Activated naive CD4-positive, alpha-beta T cell treated with anti-CD3 and anti-CD28 coated beads for 36 hours (primary cell): ENCODE measurements at regions of chr20 and their contacts with region 1.

Region 1: GRCh38 chr20:18632196-18633009 is 44.5 kb downstream of the DTD1 start:
- DNase-seq: peak; percentile 66
- H3K4me3 Mint-ChIP-seq: no peak overlapping the region
- H3K27ac Mint-ChIP-seq: no peak overlapping the region
- H3K4me1 Mint-ChIP-seq: no peaks in the 10 kb centered on the region
- H3K27me3 Mint-ChIP-seq: no peaks in the 10 kb centered on the region

Region 2: DNA sequence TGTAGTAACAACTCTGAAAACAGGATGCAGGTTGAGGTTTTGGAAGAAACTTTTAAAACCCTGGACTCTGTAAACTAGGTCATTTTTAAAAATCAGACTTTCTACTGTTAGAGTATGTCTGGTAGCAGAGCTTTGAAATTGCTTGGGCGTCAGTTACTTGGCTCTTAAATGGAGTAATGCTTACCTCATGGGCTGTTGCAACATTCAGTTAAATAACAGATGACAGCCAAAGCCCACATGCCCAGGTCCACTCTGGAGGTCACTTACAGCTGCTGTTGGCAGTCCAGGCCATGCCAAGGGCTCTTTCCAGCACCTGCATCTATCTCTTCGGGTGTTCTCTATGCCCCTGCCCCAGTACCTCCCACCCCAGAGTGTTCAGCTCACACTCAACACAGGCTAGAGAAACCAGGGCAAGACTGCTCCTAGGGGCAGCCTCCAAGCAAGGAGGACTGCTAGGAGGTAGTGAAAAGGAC is 836.3 kb before region 1 on chr20:
- CTCF ChIA-PET with region 1: no interaction called
- intact Hi-C with region 1: no loop called
- DNase-seq: no peak
- H3K4me3 Mint-ChIP-seq: no peak overlapping the region
- H3K27ac Mint-ChIP-seq: no peak overlapping the region
- H3K4me1 Mint-ChIP-seq: no peaks in the 10 kb centered on the region
- H3K27me3 Mint-ChIP-seq: peaks cover 27% of the 10 kb centered on the region

Region 3: GRCh38 chr20:18466574-18466893 is 165.9 kb before region 1 on chr20:
- CTCF ChIA-PET with region 1: no interaction called
- intact Hi-C with region 1: no loop called
- DNase-seq: no peak
- H3K4me3 Mint-ChIP-seq: peak overlapping the region; percentile 92
- H3K27ac Mint-ChIP-seq: peak overlapping the region; percentile 84
- H3K4me1 Mint-ChIP-seq: peaks cover 32% of the 10 kb centered on the region
- H3K27me3 Mint-ChIP-seq: no peaks in the 10 kb centered on the region

Region 4: DNA sequence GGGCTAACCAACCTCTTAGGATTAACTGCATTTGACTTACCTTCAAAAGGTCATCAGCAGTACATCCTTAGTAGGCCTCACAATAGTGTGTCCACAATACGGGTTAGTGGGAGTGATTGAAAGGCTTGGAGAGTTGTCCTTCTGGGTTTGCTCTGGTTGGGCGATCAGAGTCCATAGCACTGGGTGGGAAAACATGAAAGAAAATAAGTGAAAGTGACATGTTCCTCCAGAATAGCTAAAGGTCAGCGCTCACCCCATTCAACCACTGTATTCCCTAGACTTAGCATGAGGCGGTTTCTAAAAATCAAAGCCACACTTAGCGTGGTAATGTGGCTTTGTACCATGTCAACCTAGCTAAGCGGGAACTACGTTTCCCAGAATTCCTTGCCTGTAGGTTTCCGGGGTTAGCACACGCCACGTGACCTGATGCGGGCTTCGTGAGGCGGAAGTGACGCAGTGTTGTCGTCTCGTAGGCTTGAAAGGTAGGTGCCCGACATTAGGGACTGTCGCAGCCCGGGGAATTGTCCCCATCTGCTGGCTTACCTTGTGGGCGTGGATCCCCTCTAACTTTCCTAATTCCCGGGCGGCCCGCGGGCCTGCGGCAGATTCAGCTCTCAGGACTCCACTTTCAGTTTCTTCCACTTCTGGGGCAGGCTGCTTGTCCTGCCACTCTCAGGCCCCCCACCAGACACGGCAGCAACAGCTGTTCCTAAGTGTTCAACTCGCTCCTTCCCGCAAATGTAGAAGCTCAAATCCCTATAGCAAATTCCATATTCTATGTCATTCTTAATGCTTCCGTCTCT is 161.4 kb after region 1 on chr20:
- CTCF ChIA-PET with region 1: no interaction called
- intact Hi-C with region 1: loop called (anchors 1 kb)
- DNase-seq: peak; percentile 93
- H3K4me3 Mint-ChIP-seq: peak overlapping the region; percentile 91
- H3K27ac Mint-ChIP-seq: peak overlapping the region; percentile 94
- H3K4me1 Mint-ChIP-seq: peaks cover 12% of the 10 kb centered on the region
- H3K27me3 Mint-ChIP-seq: peaks cover 8% of the 10 kb centered on the region

Region 5: DNA sequence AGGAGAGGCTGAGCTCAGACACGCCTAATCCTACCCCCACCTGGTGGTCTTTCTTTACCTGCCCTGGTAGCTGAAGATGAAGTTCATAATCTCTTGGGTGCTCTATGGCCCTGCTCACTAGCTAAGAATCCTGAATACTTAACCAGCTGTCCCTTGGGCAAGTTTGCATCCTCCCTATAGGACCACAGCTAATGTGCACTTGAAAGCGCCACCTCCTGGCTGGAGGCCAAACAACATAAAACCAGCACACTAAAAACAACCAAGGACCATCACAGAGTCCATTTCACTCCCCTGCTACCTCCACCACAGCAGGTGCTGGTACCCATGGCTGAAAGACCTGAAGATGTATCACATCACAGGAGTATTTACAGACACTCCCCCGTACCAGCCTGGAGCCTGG is 424.5 kb after region 1 on chr20:
- CTCF ChIA-PET with region 1: interaction called, 5 read pairs
- intact Hi-C with region 1: loop called (anchors 1 kb)
- DNase-seq: peak; percentile 28
- H3K4me3 Mint-ChIP-seq: no peak overlapping the region
- H3K27ac Mint-ChIP-seq: no peak overlapping the region
- H3K4me1 Mint-ChIP-seq: no peaks in the 10 kb centered on the region
- H3K27me3 Mint-ChIP-seq: no peaks in the 10 kb centered on the region

Region 6: DNA sequence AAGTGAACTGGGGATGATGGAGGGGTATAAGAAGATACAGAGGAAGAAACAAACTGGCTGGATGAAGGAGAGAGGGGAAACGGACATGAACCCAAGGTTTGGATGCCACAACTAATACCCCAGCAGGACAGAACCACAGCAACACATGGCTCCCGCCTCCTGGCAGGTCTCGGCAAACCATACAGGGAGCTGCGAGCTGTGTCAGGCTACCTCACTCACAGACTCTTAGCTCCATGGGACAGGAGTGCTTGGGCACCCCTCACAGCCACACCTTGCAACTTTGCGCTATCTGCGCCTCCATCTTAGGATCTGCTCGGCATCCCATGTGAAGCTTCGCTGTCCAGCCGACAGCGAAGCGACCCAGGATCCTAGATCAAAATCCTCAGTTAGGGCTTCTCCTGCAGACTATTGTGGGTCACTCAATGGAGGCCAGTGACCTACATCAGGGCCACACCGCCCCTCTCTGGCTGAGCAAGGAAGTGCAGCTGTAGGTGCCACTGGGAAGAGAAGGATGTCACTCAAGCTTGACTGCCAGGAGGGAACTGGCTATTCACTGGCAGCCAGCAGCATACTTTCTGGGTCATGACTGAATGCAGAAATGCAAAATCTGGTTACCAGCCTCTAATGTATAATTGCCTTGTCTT is 951.3 kb after region 1 on chr20:
- CTCF ChIA-PET with region 1: no interaction called
- intact Hi-C with region 1: loop called (anchors 10 kb)
- DNase-seq: peak; percentile 66
- H3K4me3 Mint-ChIP-seq: no peak overlapping the region
- H3K27ac Mint-ChIP-seq: no peak overlapping the region
- H3K4me1 Mint-ChIP-seq: no peaks in the 10 kb centered on the region
- H3K27me3 Mint-ChIP-seq: no peaks in the 10 kb centered on the region

Region 7: GRCh38 chr20:19661717-19662636 is 1029.6 kb after region 1 on chr20:
- CTCF ChIA-PET with region 1: no interaction called
- intact Hi-C with region 1: loop called (anchors 5 kb)
- DNase-seq: peak; percentile 63
- H3K4me3 Mint-ChIP-seq: no peak overlapping the region
- H3K27ac Mint-ChIP-seq: no peak overlapping the region
- H3K4me1 Mint-ChIP-seq: no peaks in the 10 kb centered on the region
- H3K27me3 Mint-ChIP-seq: peaks cover 11% of the 10 kb centered on the region